Calu3 (cell line): ENCODE measurements at regions of chr1 and their contacts with region 1.

Region 1: DNA sequence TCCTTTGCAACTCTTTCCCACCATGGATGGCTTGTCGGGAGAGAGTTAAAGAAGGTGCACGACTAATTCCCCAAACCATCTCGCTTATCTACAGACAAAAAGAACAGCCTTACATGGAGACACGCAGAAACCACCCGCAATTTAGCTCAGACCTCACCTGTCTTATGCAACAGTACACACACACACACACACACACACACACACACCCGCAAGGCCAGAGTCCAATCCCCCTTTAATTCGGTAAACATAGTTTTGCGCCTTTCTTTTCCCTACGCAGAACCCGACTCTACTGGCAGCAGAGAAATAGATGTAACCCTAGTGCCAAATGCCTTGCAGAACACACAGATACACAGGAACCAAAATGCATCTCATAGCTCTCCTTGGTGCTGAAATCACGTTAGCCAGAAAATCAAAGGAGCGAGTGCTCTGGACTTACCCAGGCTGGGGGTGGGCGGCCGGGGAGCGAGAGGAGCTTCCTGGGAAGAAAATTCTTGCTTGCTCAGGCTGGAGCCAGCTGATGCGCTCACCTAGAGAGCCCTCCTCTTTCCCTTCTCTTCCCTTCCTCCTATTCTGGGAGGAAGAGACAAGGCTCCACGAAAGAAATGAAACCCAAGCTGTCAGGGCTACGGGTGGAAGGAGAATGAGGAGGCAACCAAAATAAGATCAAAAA is 470 bp downstream of the TNR start:
- DNase-seq: no peak
- H3K4me3 Mint-ChIP-seq: no peak overlapping the region
- H3K27ac Mint-ChIP-seq: no peak overlapping the region
- H3K4me1 Mint-ChIP-seq: no peaks in the 10 kb centered on the region
- H3K27me3 Mint-ChIP-seq: peaks cover 57% of the 10 kb centered on the region
- CTCF ChIP-seq: no peak

Region 2: GRCh38 chr1:176073524-176074157 is 330.7 kb after region 1 on chr1:
- CTCF ChIA-PET with region 1: no interaction called
- intact Hi-C with region 1: loop called (anchors 10 kb)
- DNase-seq: peak; percentile 53
- H3K4me3 Mint-ChIP-seq: no peak overlapping the region
- H3K27ac Mint-ChIP-seq: no peak overlapping the region
- H3K4me1 Mint-ChIP-seq: no peaks in the 10 kb centered on the region
- H3K27me3 Mint-ChIP-seq: no peaks in the 10 kb centered on the region
- CTCF ChIP-seq: peak; percentile 63